ENCODE measurements at regions of chr2 and their contacts with region 1.

Region 1: DNA sequence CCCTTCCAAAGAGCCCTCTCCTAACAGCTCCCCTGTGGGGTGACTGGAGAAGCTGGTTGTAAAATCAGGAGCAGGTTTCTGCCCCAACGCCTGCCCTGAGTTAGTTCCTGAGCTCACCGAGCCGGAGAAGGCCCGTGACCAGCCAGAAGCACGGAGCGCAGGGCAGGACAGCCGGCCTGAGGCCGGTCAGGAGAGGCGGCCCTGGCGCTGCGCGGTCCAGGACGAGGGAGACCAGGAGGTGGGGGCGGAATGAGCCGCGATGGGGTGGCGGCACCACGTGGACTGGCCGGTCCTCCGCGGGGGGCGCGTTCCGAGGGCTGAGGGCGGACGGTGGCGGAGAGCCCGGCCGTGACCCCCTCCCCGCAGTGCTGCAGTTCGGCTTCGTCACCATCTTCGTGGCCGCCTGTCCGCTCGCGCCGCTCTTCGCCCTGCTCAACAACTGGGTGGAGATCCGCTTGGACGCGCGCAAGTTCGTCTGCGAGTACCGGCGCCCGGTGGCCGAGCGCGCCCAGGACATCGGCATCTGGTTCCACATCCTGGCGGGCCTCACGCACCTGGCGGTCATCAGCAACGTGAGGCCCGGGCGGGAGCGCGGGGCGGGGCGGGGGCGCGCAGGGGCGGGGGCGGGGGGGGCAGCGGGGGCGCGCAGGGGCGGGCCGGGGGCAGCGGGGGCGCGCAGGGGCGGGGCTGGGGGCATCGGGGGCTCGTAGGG is 29.0 kb downstream of the ANO7 start:
- DNase-seq: peak; percentile 60
- ATAC-seq: peak; percentile 37
- H3K4me3 Mint-ChIP-seq: peak overlapping the region; percentile 56
- H3K27ac Mint-ChIP-seq: no peak overlapping the region
- H3K4me1 Mint-ChIP-seq: peaks cover 9% of the 10 kb centered on the region
- H3K27me3 Mint-ChIP-seq: peaks cover 2% of the 10 kb centered on the region

Region 2: GRCh38 chr2:240851078-240851991 is 366.1 kb before region 1 on chr2:
- CTCF ChIA-PET with region 1: no interaction called
- POLR2A ChIA-PET with region 1: no interaction called
- intact Hi-C with region 1: loop called in 1 of 2 experiments (anchors 5 kb)
- DNase-seq: peak; percentile 91
- ATAC-seq: peak; percentile 97
- H3K4me3 Mint-ChIP-seq: no peak overlapping the region
- H3K27ac Mint-ChIP-seq: no peak overlapping the region
- H3K4me1 Mint-ChIP-seq: no peaks in the 10 kb centered on the region
- H3K27me3 Mint-ChIP-seq: peaks cover 3% of the 10 kb centered on the region

Region 3: DNA sequence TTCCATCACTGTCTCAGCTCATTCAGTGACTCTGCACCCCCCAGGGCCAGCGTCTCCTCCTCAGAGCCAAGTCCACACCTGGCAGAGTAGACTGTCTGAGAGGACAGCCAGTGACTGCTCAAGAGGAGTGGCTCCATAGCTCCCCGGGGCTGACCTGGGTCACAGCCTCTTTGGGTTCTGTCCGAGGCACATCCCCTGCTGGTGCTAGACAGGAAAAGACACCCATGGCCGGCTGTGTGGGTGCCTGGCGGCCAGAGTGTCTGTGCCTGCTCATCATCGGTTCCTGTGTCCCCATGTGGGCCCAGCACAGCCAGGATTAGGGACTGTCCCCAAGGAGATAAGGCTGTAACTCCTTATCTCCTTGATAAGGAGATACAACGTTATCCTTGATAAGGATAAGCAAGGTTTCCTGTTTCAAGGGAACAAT is 314.8 kb before region 1 on chr2:
- CTCF ChIA-PET with region 1: no interaction called
- POLR2A ChIA-PET with region 1: no interaction called
- intact Hi-C with region 1: no loop called
- DNase-seq: no peak
- ATAC-seq: no peak
- H3K4me3 Mint-ChIP-seq: no peak overlapping the region
- H3K27ac Mint-ChIP-seq: no peak overlapping the region
- H3K4me1 Mint-ChIP-seq: no peaks in the 10 kb centered on the region
- H3K27me3 Mint-ChIP-seq: no peaks in the 10 kb centered on the region

Region 4: DNA sequence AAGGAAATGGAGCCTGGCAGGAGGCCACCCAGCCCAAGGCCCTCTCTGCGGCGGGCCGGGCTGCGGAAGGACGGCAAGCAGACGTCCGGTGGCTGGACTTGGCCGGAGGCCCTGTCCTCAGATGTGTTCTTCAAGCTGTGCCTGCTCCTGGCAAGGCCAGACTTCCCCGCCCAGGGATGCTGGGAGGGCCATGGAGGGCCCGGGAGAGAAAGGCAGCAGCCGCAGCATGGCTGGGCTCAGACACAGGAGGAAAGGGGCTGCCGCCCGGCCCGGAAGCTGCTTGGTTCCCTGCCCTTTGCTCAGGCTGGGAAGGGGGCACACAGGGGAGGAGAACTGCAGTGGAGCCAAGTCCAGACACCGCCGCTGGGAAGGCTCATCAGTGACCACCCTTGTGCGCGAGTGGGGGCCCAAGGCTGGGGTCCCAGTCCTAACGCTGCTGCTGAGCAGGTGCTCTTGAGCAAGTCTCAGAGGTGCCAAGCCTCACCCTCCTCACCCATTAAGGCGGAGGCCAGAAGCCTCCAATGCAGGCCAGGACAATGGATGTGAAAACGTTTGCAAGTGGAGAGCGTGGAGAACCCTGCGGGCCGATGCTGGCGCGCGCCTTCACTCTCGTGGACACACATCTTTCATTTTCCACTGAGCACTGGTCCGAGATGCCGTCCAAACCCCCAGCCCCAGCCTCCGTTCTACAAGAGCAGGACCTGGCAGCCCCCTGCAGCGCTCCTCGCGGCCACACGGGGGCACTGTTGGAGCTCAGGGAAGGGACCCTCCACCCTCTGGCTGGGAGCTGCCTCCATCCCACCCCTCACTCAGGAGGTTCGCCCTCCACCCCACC is 303.4 kb before region 1 on chr2:
- CTCF ChIA-PET with region 1: no interaction called
- POLR2A ChIA-PET with region 1: no interaction called
- intact Hi-C with region 1: loop called in 1 of 2 experiments (anchors 5 kb)
- DNase-seq: peak; percentile 83
- ATAC-seq: peak; percentile 68
- H3K4me3 Mint-ChIP-seq: no peak overlapping the region
- H3K27ac Mint-ChIP-seq: no peak overlapping the region
- H3K4me1 Mint-ChIP-seq: no peaks in the 10 kb centered on the region
- H3K27me3 Mint-ChIP-seq: peaks cover 14% of the 10 kb centered on the region

Region 5: DNA sequence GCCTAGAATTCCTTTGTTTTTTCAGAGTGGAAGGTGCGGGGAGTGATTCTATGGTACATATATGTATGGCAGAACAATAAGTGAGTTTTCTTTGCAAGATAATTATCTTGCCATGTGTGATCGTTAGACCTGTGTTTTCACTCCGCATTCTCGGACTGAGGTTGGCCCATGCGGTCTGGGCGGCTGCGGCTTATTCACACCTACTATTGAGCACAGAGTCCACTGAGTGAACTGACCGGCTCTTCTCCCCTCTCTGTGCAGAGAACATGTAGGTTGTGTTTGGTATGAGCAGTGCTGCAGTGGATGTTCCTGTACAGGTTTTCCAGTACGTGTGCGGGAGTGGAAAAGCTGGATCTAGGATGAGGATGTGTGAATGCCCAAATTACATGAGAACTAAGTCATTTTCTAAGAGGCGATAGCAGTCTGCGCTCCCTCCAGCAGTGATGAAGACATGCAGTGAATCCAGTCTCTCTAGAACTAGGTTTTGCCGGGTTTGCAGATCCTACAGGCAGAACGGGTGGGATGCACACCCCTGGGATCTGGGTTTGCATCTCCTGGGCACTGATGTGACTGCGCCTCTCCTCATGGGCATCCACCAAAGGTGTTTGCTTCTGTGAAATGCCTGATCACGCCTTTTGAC is 142.5 kb before region 1 on chr2:
- CTCF ChIA-PET with region 1: no interaction called
- POLR2A ChIA-PET with region 1: no interaction called
- intact Hi-C with region 1: loop called in 1 of 2 experiments (anchors 5 kb)
- DNase-seq: no peak
- ATAC-seq: no peak
- H3K4me3 Mint-ChIP-seq: no peak overlapping the region
- H3K27ac Mint-ChIP-seq: no peak overlapping the region
- H3K4me1 Mint-ChIP-seq: no peaks in the 10 kb centered on the region
- H3K27me3 Mint-ChIP-seq: no peaks in the 10 kb centered on the region

Region 6: DNA sequence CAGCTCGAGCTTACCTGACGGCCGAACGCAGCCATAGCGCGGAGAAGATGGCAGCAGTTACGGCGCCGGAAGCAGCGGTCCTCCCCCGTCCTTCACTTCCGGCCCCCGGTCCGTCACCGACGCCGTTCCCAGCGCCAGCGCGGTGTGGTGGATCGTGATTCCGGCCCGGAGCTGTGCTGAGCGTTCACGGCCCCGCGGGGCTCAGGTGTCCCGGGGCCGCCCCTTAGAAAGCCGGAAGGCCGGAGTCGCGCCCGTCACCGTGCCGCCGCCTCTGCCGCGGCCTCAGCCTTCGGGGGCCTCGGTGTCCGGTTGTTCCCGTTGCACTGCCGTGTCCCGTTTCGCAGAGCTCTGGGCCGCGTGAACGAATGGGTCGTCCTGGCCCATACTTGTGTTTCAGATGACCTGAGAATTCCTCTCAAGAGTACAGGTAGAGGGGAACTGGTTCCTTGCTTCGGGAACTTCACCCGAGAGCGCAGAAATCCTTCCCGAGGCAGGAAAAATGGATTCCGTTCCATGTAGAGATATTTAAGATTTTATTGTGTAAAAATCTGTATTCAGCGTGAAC is 115.2 kb before region 1 on chr2 and contains the start of gene MTERF4:
- CTCF ChIA-PET with region 1: interaction called, 3 read pairs
- POLR2A ChIA-PET with region 1: no interaction called
- intact Hi-C with region 1: loop called in 1 of 2 experiments (anchors 2 kb)
- DNase-seq: peak; percentile 94
- ATAC-seq: peak; percentile 97
- H3K4me3 Mint-ChIP-seq: peak within 1 kb of the TSS; percentile 98
- H3K27ac Mint-ChIP-seq: peak within 1 kb of the TSS; percentile 99
- H3K4me1 Mint-ChIP-seq: peaks cover 48% of the 10 kb centered on the region
- H3K27me3 Mint-ChIP-seq: no peaks in the 10 kb centered on the region
- total RNA-seq, gene MTERF4: 34.4 to 34.5 TPM

Region 7: DNA sequence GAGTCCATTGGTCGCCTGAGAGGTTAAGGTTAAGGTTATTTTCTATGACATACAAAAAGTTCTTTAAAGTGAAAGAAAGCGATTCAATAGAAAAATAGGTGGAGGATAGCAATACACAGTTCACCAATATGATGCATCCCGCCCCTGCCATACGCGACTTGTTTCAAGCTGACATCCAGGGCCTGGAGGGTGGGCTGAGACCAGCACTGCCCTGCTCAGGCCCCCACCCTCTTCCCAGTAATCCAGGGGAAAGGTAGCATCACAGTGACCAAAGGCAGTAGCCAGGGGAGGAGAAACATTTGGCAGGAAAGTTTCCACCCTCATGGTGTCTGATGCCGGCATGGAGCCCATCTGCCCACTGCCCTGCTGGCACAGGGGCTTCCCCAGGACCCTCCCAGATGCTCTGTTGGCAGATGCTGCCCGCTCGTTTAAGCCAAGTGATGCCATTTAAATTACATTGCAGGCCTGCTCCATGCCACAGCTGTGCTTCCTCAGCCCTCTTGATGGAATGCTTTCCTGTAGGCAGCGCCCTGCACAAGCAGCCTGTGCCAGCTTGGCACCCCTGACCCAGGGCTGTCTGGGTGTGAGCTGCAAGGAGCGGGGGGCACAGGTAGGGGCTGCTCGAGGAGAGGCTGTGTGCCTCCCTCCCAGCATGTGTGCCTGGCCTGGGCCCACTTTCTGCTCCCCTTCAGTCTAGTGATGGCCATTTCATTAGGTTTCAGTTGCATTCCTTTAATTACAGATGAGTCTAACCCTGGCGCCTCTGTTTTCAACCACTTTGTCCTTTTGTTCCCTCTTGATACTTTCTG is 39.7 kb before region 1 on chr2:
- CTCF ChIA-PET with region 1: no interaction called
- POLR2A ChIA-PET with region 1: no interaction called
- intact Hi-C with region 1: no loop called
- DNase-seq: no peak
- ATAC-seq: no peak
- H3K4me3 Mint-ChIP-seq: no peak overlapping the region
- H3K27ac Mint-ChIP-seq: no peak overlapping the region
- H3K4me1 Mint-ChIP-seq: peaks cover 13% of the 10 kb centered on the region
- H3K27me3 Mint-ChIP-seq: no peaks in the 10 kb centered on the region

Region 8: DNA sequence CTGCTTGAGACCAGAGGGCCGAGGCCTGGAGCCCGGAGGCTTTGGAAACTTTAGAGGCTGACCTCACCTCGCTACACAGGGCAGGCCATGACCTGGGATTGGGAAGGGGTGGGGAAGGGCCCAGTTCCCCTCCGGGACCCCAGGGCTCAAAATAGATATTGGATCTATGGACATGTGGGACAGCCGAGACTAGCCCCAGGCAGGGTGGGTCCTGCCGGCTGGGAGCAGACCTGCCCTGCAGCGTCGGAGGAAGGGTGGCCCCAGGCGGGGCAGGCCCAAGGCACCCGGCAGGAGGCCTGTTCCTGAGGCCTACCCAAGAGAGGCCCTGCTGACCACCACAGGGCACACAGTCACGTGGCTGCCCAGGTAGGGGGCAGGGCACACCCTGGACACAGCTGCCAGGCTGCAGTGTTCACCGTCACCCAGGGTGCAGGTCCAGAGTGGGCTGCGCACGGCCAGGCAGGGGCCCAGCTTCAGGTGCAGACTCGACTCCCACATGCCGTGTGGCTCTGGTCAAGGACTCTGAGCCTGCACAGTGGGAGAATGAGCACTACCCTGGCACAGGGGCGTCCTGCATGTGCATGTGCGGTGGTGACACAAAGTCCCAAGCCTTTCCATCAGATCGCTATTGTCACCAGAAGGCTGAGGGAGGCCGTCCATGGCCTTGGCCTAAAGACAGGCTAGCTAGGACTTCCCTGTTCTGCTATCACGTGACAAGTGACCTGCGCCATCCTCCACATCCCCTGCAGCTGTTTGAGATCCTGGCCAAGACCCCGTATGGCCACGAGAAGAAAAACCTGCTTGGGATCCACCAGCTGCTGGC is 15.8 kb before region 1 on chr2:
- CTCF ChIA-PET with region 1: no interaction called
- POLR2A ChIA-PET with region 1: no interaction called
- intact Hi-C with region 1: no loop called
- DNase-seq: no peak
- ATAC-seq: no peak
- H3K4me3 Mint-ChIP-seq: no peak overlapping the region
- H3K27ac Mint-ChIP-seq: no peak overlapping the region
- H3K4me1 Mint-ChIP-seq: no peaks in the 10 kb centered on the region
- H3K27me3 Mint-ChIP-seq: no peaks in the 10 kb centered on the region

Measured in activated CD4-positive, alpha-beta T cell treated with anti-CD3 and anti-CD28 coated beads for 36 hours (primary cell).